Right lobe of liver (tissue), 6 donors: ENCODE measurements at regions of chr21 and their contacts with region 1.

Region 1: GRCh38 chr21:41459884-41460534 is 34.0 kb downstream of the MX1 start:
- DNase-seq: peak in 1 of 3 donors; percentile 17
- ATAC-seq: peak in 1 of 4 donors; percentile 14
- H3K4me3 ChIP-seq: no peak overlapping the region
- H3K27ac ChIP-seq: no peak overlapping the region
- H3K4me1 ChIP-seq: no peaks in the 10 kb centered on the region
- H3K27me3 ChIP-seq: no peaks in the 10 kb centered on the region
- CTCF ChIP-seq: no peak
- POLR2A ChIP-seq: no peak

Region 2: GRCh38 chr21:41283211-41283818 is 176.7 kb before region 1 on chr21:
- intact Hi-C with region 1: loop called in 1 of 2 experiments (anchors 10 kb)
- DNase-seq: peak in 1 of 3 donors; percentile 64
- ATAC-seq: peak; percentile 97 to 100 (median 99)
- H3K4me3 ChIP-seq: no peak overlapping the region
- H3K27ac ChIP-seq: no peak overlapping the region
- H3K4me1 ChIP-seq: no peaks in the 10 kb centered on the region
- H3K27me3 ChIP-seq: no peaks in the 10 kb centered on the region
- CTCF ChIP-seq: peak; percentile 78 to 88 (median 80)
- POLR2A ChIP-seq: no peak

Region 3: GRCh38 chr21:41294539-41295231 is 165.3 kb before region 1 on chr21:
- intact Hi-C with region 1: loop called (anchors 10 kb)
- DNase-seq: no peak
- ATAC-seq: no peak
- H3K4me3 ChIP-seq: no peak overlapping the region
- H3K27ac ChIP-seq: no peak overlapping the region
- H3K4me1 ChIP-seq: no peaks in the 10 kb centered on the region
- H3K27me3 ChIP-seq: peaks cover 0 to 9% of the 10 kb centered on the region in 2 donors
- CTCF ChIP-seq: no peak
- POLR2A ChIP-seq: no peak